PC-9 (cell line): ENCODE measurements at regions of chr1 and their contacts with region 1.

Region 1: DNA sequence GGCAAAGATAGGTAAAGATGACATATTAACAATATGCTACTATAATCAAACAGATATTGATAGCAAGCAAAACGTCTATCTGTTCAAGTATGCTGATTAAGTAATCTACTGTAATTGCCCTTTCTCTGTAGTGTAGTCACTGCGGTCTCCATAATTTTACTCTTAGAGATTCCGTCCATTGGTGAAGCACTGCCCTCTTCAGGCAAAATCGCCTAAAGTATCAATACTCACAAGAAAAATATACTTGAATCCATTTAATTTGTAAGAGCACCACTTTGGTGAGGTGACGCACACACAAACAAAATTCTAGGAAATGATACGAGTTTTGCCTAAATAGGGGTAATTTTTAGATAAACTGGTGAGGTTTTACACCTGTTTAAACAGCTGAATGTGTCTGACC is 434.6 kb upstream of the CHRM3 start:
- DNase-seq: peak in 1 of 2 experiments; percentile 4
- H3K4me3 ChIP-seq: no peak overlapping the region
- H3K27ac ChIP-seq: no peak overlapping the region
- H3K4me1 ChIP-seq: no peaks in the 10 kb centered on the region
- H3K27me3 ChIP-seq: no peaks in the 10 kb centered on the region
- CTCF ChIP-seq: peak; percentile 58

Region 2: GRCh38 chr1:238239343-238239742 is 712.5 kb before region 1 on chr1:
- CTCF ChIA-PET with region 1: no interaction called
- POLR2A ChIA-PET with region 1: no interaction called
- intact Hi-C with region 1: loop called (anchors 2 kb)
- DNase-seq: no peak
- H3K4me3 ChIP-seq: no peak overlapping the region
- H3K27ac ChIP-seq: no peak overlapping the region
- H3K4me1 ChIP-seq: no peaks in the 10 kb centered on the region
- H3K27me3 ChIP-seq: no peaks in the 10 kb centered on the region
- CTCF ChIP-seq: no peak

Region 3: DNA sequence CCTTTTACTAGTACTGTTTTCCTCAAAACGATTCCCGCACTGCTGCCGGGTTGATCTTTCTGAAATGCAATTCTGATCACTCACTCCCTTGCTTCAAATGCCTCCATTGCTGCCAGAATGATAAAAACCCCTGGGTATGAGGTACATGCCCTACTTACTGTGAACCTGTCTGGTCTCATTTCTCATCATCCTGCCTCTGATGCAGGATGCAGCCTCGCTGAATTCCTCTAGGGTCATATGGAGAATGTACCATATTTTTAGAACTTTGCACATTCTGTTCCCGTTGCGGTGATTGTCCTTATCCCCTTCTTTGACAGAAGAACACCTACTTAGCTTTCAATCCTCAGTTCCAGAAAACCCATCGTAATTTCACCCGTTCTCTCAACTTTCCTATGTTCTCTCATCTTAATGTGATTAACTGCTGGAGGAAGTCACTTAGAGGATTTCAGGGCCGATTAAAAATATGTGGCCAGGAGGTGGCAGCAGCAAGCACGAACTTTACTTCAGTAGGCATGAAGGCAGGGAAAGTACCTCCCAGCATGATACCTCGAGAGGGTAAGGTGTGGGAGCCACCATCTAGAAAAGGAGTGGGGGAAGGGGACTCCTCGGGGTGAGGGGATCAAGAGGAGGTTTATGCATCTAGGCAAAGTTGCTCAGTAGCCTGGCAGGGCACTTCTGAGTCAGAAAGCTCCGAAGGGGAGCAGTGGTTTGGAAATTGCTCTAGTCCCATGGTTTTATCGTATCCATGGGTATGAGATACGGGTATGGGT is 699.6 kb before region 1 on chr1:
- CTCF ChIA-PET with region 1: no interaction called
- POLR2A ChIA-PET with region 1: no interaction called
- intact Hi-C with region 1: loop called (anchors 2 kb)
- DNase-seq: peak in 1 of 2 experiments; percentile 26
- H3K4me3 ChIP-seq: no peak overlapping the region
- H3K27ac ChIP-seq: no peak overlapping the region
- H3K4me1 ChIP-seq: no peaks in the 10 kb centered on the region
- H3K27me3 ChIP-seq: no peaks in the 10 kb centered on the region
- CTCF ChIP-seq: peak; percentile 71